ENCODE measurements at regions of chr17 and their contacts with region 1.

Region 1: DNA sequence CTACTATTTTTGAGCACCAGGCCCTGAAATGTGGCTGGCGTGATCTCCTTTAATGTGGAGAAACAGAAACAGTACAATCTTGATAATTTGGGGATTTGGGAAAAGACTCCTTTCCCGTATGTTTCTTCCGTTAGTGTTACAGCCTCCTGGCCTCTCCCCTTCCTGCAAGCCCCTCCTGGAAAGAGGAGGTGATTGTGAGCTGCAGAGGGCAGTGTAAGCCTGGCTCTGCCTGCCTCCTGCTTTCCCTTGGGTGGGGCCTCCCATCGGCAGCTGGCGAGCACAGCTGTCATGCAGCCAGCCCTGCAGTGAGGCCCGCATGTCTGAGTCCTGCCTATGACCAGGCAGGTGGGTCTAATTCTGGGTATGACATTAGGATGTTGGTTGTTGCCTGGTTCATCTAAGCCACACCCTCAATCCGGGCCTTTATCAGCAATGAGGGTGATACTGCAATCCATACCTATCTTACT is 48.7 kb upstream of the WSB1 start:
- DNase-seq: peak; percentile 90
- H3K4me3 ChIP-seq: no peak overlapping the region
- H3K4me3 Mint-ChIP-seq: peak overlapping the region; percentile 46
- H3K27ac Mint-ChIP-seq: peak overlapping the region; percentile 5
- H3K4me1 ChIP-seq: peaks cover 42% of the 10 kb centered on the region
- H3K4me1 Mint-ChIP-seq: peaks cover 37% of the 10 kb centered on the region
- H3K27me3 ChIP-seq: no peaks in the 10 kb centered on the region
- H3K27me3 Mint-ChIP-seq: no peaks in the 10 kb centered on the region
- CTCF ChIP-seq: peak; percentile 75 to 89

Region 2: DNA sequence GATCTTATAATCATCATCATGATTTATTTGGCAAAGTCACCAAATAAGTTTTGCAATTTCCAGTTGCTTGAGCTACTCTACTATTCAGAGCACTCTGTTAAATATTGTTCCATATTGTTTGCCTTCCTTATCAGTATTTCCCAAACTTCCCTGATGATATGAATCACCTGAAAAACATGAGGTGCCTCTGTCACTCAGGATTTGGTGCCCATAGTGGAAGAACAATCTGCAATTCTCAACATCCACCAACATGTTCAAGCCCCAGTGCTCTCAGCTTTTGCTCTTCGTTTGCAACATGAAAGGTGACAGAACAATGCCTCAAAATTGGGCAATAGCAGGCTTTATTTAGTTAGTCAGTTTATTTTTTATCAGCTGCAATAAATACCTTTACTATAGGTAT is 20.1 kb after region 1 on chr17:
- CTCF ChIA-PET with region 1: interaction called, 11 read pairs
- POLR2A ChIA-PET with region 1: no interaction called
- intact Hi-C with region 1: loop called (anchors 1 kb)
- DNase-seq: peak; percentile 71 to 74
- H3K4me3 ChIP-seq: no peak overlapping the region
- H3K4me3 Mint-ChIP-seq: no peak overlapping the region
- H3K27ac Mint-ChIP-seq: peak overlapping the region; percentile 20
- H3K4me1 ChIP-seq: peaks cover 31% of the 10 kb centered on the region
- H3K4me1 Mint-ChIP-seq: peaks cover 29% of the 10 kb centered on the region
- H3K27me3 ChIP-seq: no peaks in the 10 kb centered on the region
- H3K27me3 Mint-ChIP-seq: no peaks in the 10 kb centered on the region
- CTCF ChIP-seq: no peak

Measured in Caco-2 (cell line).